ENCODE measurements at regions of chr1 and their contacts with region 1.

Region 1: DNA sequence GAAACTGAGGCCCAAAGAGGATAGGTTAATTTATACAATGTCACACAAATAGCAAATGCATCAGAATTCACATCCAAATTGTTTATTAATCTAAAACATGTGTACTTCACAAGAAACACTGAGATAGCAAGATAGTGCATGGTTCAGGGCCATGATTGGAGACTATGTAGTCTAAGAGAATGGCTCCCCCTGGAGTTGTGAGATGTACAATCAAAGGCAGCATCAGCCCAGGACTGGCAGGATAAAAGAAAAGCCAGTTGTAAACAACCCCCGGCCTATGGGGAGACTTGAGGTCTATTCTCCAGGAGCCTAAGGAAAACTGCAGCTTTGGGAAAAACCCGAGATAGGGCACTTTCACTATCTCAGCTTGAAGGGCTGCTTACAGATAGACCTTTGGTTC is 511.0 kb downstream of the OMA1 start:
- DNase-seq: no peak
- H3K4me3 ChIP-seq: no peak overlapping the region
- H3K27ac ChIP-seq: no peak overlapping the region
- H3K4me1 ChIP-seq: no peaks in the 10 kb centered on the region
- H3K27me3 ChIP-seq: no peaks in the 10 kb centered on the region
- CTCF ChIP-seq: peak; percentile 9 to 39

Region 2: DNA sequence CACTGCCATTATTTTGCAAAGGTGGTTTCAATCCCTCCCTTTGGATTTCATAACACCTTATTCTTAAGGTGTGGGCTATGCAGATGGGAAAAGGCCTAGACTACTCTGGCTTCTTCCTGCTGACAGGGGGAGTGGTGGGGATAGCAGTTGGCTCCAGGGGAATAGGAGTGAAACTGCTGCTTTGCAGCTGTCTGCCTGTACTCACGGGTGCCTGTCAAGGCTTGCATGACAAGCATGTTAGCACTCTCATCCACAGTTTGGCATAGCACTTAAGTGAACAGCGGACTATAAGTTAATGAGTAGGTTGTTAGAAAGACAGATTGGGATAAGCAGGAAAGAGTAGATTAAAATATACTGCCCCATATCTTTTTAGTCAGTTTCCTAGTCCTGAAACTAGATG is 324.2 kb before region 1 on chr1:
- CTCF ChIA-PET with region 1: no interaction called
- dilution Hi-C with region 1: no loop called
- in situ Hi-C with region 1: no loop called
- intact Hi-C with region 1: loop called (anchors 5 kb)
- DNase-seq: peak; percentile 23
- H3K4me3 ChIP-seq: no peak overlapping the region
- H3K27ac ChIP-seq: no peak overlapping the region
- H3K4me1 ChIP-seq: no peaks in the 10 kb centered on the region
- H3K27me3 ChIP-seq: no peaks in the 10 kb centered on the region
- CTCF ChIP-seq: peak in 1 of 2 donors; percentile 11

Region 3: GRCh38 chr1:57761628-57762027 is 273.9 kb before region 1 on chr1:
- CTCF ChIA-PET with region 1: no interaction called
- dilution Hi-C with region 1: no loop called
- in situ Hi-C with region 1: no loop called
- intact Hi-C with region 1: loop called (anchors 5 kb)
- DNase-seq: no peak
- H3K4me3 ChIP-seq: no peak overlapping the region
- H3K27ac ChIP-seq: no peak overlapping the region
- H3K4me1 ChIP-seq: no peaks in the 10 kb centered on the region
- H3K27me3 ChIP-seq: no peaks in the 10 kb centered on the region
- CTCF ChIP-seq: no peak

Region 4: GRCh38 chr1:57831624-57832023 is 203.9 kb before region 1 on chr1:
- CTCF ChIA-PET with region 1: no interaction called
- dilution Hi-C with region 1: no loop called
- in situ Hi-C with region 1: no loop called
- intact Hi-C with region 1: loop called (anchors 1 kb)
- DNase-seq: peak; percentile 89
- H3K4me3 ChIP-seq: no peak overlapping the region
- H3K27ac ChIP-seq: no peak overlapping the region
- H3K4me1 ChIP-seq: peaks cover 40% of the 10 kb centered on the region
- H3K27me3 ChIP-seq: no peaks in the 10 kb centered on the region
- CTCF ChIP-seq: no peak

Region 5: DNA sequence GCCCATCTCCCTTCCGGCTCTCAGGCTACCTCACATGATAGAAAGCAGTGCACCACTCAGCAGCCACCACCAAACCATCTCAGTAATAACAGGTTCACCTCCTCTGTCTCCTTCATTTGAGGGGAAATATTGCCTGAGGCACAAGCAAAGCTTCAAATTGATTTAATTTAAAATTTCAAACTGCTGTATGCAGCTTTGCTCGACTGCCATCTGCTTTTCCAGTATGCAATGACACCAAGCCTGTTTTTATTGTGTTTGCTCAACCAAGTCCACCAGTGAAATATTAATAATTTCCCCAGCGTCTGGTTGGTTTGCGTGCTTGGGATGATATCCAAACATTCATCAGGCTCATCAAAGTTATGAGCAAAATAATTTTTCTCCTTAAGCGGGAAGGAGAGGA is 59.3 kb before region 1 on chr1:
- CTCF ChIA-PET with region 1: no interaction called
- dilution Hi-C with region 1: no loop called
- in situ Hi-C with region 1: no loop called
- intact Hi-C with region 1: no loop called
- DNase-seq: no peak
- H3K4me3 ChIP-seq: no peak overlapping the region
- H3K27ac ChIP-seq: no peak overlapping the region
- H3K4me1 ChIP-seq: no peaks in the 10 kb centered on the region
- H3K27me3 ChIP-seq: no peaks in the 10 kb centered on the region
- CTCF ChIP-seq: peak in 1 of 2 donors; percentile 37

Region 6: GRCh38 chr1:58136387-58136786 is 100.9 kb after region 1 on chr1:
- CTCF ChIA-PET with region 1: no interaction called
- dilution Hi-C with region 1: loop called (anchors 5 kb)
- in situ Hi-C with region 1: no loop called
- intact Hi-C with region 1: no loop called
- DNase-seq: no peak
- H3K4me3 ChIP-seq: no peak overlapping the region
- H3K27ac ChIP-seq: no peak overlapping the region
- H3K4me1 ChIP-seq: no peaks in the 10 kb centered on the region
- H3K27me3 ChIP-seq: no peaks in the 10 kb centered on the region
- CTCF ChIP-seq: no peak